ENCODE measurements at regions of chr10 and their contacts with region 1.

Region 1: DNA sequence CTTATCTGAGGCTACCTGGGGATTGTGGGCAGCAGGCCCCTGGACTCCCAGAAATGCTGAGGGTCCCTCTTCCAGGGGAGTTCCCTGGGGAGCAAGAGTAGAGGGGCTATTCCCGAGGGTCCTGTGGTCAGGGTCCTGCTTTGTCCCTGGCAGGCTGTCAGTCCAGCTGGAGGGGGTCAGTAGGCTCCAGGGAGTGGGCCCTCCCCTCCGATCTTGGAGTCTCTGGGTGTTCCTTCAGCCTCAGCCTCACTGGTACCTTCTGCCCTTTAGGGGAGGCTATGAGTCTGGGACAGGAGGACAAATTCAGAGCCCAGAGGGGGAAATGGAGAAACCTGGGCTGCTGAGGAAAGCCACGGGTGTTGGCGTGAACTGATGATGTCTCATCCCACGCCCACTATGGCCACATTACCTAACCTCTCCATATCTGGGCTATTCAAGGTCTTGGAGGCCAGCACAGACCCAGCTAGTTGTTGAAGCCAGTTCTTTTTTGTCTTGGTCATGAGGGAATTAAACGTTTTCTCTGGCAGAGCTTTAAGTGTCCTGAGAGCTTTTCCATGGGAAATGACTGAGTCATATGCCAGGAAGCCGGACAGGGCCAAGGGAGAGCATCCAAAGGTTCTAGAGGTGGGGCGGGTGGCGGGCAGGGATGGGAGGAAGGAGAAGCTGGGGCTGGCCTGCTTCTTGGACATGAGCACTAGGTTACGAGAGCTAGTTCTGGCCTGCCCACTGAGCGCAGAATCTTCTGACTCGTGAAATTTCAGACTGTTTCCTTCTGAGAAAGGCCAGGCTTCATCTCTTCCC is 6.2 kb downstream of the CALHM2 start:
- DNase-seq: peak in 1 of 5 donors; percentile 28
- H3K4me3 ChIP-seq: no peak overlapping the region
- H3K4me3 Mint-ChIP-seq: peak overlapping the region in 2 of 7 donors; percentile 44 to 62
- H3K27ac ChIP-seq: no peak overlapping the region
- H3K27ac Mint-ChIP-seq: peak overlapping the region in 5 of 8 donors; percentile 31 to 81 (median 66)
- H3K4me1 ChIP-seq: peaks cover 23% of the 10 kb centered on the region
- H3K4me1 Mint-ChIP-seq: peaks cover 35 to 59% (median 43%) of the 10 kb centered on the region in 3 donors
- H3K27me3 ChIP-seq: no peaks in the 10 kb centered on the region
- H3K27me3 Mint-ChIP-seq: no peaks in the 10 kb centered on the region

Region 2: DNA sequence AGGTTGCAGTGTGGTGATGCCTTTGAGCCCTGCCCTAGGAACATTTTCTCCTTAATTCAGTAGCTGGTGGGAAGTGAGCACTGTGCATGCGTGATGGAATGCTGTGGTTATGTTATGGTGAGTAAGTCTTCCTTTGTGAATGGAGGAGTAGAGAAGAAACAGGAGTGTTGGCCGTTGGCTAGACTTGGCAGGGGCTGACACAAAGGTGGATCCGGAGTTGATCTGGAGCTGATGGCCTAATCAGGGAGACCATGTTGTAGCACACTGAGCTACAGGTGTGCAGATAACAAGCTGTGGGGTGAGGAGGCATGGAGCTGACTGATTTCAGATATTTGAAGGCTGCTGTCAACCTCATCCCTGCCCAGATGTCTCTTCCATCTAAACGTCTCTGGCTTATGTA is 405.5 kb before region 1 on chr10:
- CTCF ChIA-PET with region 1: no interaction called
- POLR2A ChIA-PET with region 1: no interaction called
- DNase-seq: no peak
- H3K4me3 ChIP-seq: no peak overlapping the region
- H3K4me3 Mint-ChIP-seq: no peak overlapping the region
- H3K27ac ChIP-seq: no peak overlapping the region
- H3K27ac Mint-ChIP-seq: peak overlapping the region in 1 of 8 donors; percentile 6
- H3K4me1 ChIP-seq: no peaks in the 10 kb centered on the region
- H3K4me1 Mint-ChIP-seq: no peaks in the 10 kb centered on the region
- H3K27me3 ChIP-seq: no peaks in the 10 kb centered on the region
- H3K27me3 Mint-ChIP-seq: peaks cover 0 to 1% of the 10 kb centered on the region in 2 donors

Region 3: GRCh38 chr10:103254538-103255325 is 191.2 kb before region 1 on chr10:
- CTCF ChIA-PET with region 1: no interaction called
- POLR2A ChIA-PET with region 1: no interaction called
- DNase-seq: no peak
- H3K4me3 ChIP-seq: no peak overlapping the region
- H3K4me3 Mint-ChIP-seq: no peak overlapping the region
- H3K27ac ChIP-seq: no peak overlapping the region
- H3K27ac Mint-ChIP-seq: no peak overlapping the region
- H3K4me1 ChIP-seq: no peaks in the 10 kb centered on the region
- H3K4me1 Mint-ChIP-seq: no peaks in the 10 kb centered on the region
- H3K27me3 ChIP-seq: no peaks in the 10 kb centered on the region
- H3K27me3 Mint-ChIP-seq: peaks cover 3 to 9% of the 10 kb centered on the region in 2 donors

Region 4: GRCh38 chr10:103396064-103396788 is 49.7 kb before region 1 on chr10 and contains the starts of genes ATP5MK and PDCD11:
- CTCF ChIA-PET with region 1: no interaction called
- POLR2A ChIA-PET with region 1: interaction called, 10 read pairs
- DNase-seq: peak; percentile 89 to 96 (median 92)
- H3K4me3 ChIP-seq: peak within 1 kb of the TSS; percentile 96
- H3K4me3 Mint-ChIP-seq: peak within 1 kb of the TSS; percentile 92 to 99 (median 98)
- H3K27ac ChIP-seq: peak within 1 kb of the TSS; percentile 76
- H3K27ac Mint-ChIP-seq: peak within 1 kb of the TSS; percentile 72 to 97 (median 96)
- H3K4me1 ChIP-seq: peaks cover 43% of the 10 kb centered on the region
- H3K4me1 Mint-ChIP-seq: peaks cover 55 to 66% (median 65%) of the 10 kb centered on the region in 3 donors
- H3K27me3 ChIP-seq: no peaks in the 10 kb centered on the region
- H3K27me3 Mint-ChIP-seq: no peaks in the 10 kb centered on the region
- total RNA-seq, gene ATP5MK: 438 to 454 TPM
- total RNA-seq, gene PDCD11: 88.5 to 91.3 TPM

Region 5: DNA sequence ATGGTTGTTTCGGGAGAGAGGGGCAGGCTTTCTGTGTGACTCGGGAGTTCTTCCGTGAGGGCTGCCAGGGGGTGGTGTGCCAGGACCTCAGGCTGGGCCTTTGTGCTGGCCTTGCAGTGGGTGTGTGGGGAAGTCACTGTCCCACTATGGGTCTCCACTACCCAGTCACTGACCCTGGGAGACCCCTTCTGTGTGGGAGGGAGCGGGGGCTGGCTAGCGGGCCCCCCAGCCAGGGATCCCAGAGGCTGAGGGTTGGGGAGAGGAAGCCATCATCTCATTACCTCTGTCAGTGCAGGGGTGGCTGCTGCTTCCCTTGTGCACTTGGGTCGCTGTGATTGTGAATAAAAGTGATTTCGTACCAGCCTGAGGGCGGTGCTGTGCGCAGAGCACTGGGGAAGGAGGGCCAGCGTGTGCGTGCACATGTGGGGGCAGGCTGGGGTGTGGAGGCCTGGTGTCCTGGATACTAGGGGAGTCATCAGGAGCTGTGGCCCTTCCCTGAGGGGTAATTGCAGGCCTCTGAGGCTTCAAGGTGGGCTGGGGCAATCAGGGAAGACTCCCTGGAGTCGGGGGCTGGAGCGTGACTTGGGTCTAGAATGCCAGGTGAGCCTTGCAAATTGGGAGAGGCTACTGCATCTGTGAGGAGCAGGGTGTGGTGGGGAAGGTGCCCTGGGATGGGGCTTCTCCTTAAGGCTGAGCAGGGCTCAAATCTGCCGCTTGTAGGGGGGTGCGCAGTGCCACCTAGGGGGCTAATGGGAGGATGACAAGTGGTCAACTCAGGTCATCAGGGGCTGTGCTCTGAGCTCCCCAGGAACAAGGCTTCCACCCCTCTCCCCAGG is 146.4 kb after region 1 on chr10:
- CTCF ChIA-PET with region 1: no interaction called
- POLR2A ChIA-PET with region 1: no interaction called
- DNase-seq: peak in 1 of 5 donors; percentile 25
- H3K4me3 ChIP-seq: no peak overlapping the region
- H3K4me3 Mint-ChIP-seq: no peak overlapping the region
- H3K27ac ChIP-seq: no peak overlapping the region
- H3K27ac Mint-ChIP-seq: no peak overlapping the region
- H3K4me1 ChIP-seq: no peaks in the 10 kb centered on the region
- H3K4me1 Mint-ChIP-seq: no peaks in the 10 kb centered on the region
- H3K27me3 ChIP-seq: no peaks in the 10 kb centered on the region
- H3K27me3 Mint-ChIP-seq: no peaks in the 10 kb centered on the region